ENCODE measurements at regions of chr15 and their contacts with region 1.

Region 1: GRCh38 chr15:84915011-84915958 is 30.8 kb downstream of the SLC28A1 start:
- DNase-seq: peak in 1 of 2 donors; percentile 97
- H3K4me3 ChIP-seq: no peak overlapping the region
- H3K27ac ChIP-seq: peak overlapping the region; percentile 84
- H3K4me1 ChIP-seq: peaks cover 50% of the 10 kb centered on the region
- H3K27me3 ChIP-seq: no peaks in the 10 kb centered on the region
- CTCF ChIP-seq: no peak
- POLR2A ChIP-seq: no peak

Region 2: GRCh38 chr15:84867997-84868885 is 47.0 kb before region 1 on chr15:
- intact Hi-C with region 1: loop called (anchors 5 kb)
- DNase-seq: no peak
- H3K4me3 ChIP-seq: no peak overlapping the region
- H3K27ac ChIP-seq: no peak overlapping the region
- H3K4me1 ChIP-seq: peaks cover 10% of the 10 kb centered on the region
- H3K27me3 ChIP-seq: no peaks in the 10 kb centered on the region
- CTCF ChIP-seq: no peak
- POLR2A ChIP-seq: no peak

Measured in vagina (tissue), 2 donors.